Activated CD4-positive, alpha-beta T cell treated with anti-CD3 and anti-CD28 coated beads, Interleukin-2, amount 10 ng/mL, durations not matched to agents 24 days and 14 days (primary cell): ENCODE measurements at regions of chr12 and their contacts with region 1.

Region 1: DNA sequence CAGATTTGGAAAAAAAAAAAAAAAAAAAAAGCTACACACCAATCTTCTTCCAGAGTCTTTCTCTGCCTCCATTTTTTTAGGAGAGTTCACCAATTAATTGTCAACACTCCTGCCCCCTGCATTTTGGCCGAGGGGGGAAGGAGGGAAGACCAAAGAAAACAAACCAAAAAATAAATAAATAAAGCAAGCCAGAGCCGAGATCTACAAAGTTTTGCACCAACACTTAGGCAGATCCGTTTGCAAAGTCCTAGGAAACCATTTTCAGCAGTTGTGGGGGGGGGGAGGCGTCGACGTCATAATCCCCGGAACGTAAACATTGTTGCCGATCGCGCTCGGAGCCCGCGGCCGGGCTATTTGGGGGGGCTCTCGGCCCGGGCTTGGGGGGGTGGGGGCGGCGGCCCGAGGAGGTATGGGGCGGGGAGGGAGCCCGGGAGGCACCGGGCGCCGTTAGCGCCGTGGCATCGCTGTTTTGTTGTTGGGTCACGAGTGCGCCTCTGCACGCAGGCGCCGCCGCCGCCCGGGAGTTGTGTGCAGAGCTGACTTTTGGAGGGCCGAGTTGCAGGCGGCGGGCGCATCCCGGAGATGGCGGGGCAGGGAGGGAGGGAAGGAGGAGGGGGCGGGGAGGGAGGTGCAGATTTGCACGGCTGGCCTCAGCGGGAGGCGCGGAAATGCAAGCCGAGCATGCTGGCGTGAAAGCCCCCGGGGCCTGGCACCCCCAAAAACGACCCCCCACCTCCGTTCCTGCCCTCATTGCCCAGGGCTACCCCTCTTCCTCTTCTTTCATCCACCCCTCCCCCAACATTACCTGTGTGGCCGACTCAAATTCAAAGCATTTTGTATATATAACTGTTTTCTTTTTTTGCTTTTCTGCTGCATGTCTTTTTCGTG is 598 bp downstream of the KDM2B start:
- DNase-seq: peak; percentile 93
- H3K4me3 Mint-ChIP-seq: peak overlapping the region; percentile 99
- H3K27ac Mint-ChIP-seq: peak overlapping the region; percentile 99
- H3K4me1 Mint-ChIP-seq: peaks cover 38% of the 10 kb centered on the region
- H3K27me3 Mint-ChIP-seq: no peaks in the 10 kb centered on the region

Region 2: DNA sequence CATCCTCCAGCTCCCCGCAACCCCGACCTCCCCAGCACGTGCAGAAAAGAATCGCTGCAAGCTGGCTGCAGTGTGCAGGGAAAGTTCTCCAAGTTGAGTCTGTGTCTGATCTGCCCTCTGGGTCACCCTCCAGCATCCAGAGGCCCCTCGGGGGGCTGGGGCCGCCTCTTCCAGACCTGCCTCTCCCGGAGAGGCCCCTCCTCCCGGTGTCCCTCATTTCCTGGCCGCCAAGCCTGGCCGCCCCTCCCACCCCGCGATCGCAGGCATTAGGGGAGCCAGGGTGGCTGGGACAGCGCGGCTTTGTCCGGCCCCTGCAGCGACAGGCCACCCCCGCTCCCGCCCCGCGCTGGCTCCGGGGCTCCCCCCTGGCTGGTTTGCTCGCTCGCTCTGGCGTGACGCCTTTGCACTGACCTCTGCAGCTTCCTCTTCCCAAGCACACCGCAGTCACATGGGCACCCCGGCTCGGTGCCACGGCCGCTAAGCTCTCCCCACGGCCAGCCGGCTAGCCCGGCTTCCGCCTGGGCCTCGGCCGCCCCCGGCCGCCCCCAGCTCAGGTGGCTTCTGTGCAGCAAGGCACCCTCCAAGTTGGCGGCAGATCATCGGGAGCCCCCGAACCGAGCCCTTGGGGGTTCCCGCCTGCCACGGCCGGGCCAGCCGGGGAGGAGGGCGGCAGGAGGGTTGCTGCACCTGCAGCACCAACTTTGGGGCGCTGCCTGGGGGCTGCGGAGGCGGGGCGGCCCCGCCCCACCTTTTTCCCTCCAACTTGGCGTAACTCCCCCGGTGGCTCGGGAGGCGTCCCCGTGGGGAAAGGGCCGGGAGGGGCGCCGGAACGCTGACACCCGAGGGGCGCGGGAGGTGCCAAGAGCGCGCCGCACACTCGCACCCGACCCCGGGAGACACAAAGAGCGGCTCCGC is 43.1 kb before region 1 on chr12:
- intact Hi-C with region 1: loop called (anchors 2 kb)
- DNase-seq: peak; percentile 84
- H3K4me3 Mint-ChIP-seq: peak overlapping the region; percentile 82
- H3K27ac Mint-ChIP-seq: peak overlapping the region; percentile 72
- H3K4me1 Mint-ChIP-seq: peaks cover 37% of the 10 kb centered on the region
- H3K27me3 Mint-ChIP-seq: peaks cover 1% of the 10 kb centered on the region

Region 3: GRCh38 chr12:121590476-121591143 is 10.4 kb after region 1 on chr12:
- intact Hi-C with region 1: loop called (anchors 1 kb)
- DNase-seq: peak; percentile 91
- H3K4me3 Mint-ChIP-seq: peak overlapping the region; percentile 84
- H3K27ac Mint-ChIP-seq: peak overlapping the region; percentile 97
- H3K4me1 Mint-ChIP-seq: peaks cover 40% of the 10 kb centered on the region
- H3K27me3 Mint-ChIP-seq: no peaks in the 10 kb centered on the region